Activated T-helper 2 cell treated with anti-CD3 and anti-CD28 coated beads, Interferon-gamma antibody, Interleukin-2, Interleukin-4, amounts not matched to agents 10 μg/mL and 5 μg/mL and 100 μg/mL, durations not matched to agents 14 hours and 24 hours and 36 hours (primary cell): ENCODE measurements at regions of chr14 and their contacts with region 1.

Region 1: DNA sequence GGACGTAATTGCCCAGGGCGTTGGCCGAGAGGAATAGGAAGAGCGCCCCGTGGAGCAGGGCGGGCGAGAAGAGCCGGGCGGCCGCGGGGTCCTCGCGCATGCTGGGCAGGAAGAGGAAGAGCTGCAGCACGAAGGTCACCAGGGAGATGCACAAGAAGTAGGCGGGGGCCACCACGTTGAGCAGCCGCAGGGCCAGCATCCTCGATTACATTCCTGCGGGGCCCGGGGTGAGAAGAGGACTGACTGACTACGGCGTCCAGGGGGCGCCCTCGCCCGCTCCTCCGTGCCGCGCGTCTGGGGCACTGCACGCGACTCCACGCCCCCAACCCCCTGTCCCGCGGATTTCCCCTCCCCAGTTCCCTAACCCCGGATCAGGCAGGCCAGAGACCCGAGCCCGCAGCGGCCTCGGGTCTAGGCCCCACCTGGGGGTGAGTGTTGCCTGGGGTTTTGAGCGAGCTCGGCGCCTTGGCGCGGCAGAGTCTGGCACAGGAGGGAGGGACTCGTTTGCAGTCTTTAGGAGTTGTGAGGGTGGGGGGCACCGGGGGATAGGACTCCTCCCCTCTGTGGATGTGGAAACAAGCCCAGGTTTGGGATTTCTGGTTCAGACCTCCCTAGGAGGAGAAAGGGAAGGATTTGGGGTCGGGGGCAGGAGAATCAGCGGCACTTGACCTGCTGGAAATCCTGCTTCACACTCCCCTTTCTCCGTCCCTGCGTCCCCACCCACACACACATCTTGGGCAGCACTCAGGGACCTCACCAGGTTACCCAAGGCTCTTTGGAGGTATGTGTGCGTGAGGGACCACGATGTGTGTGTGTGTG is 1.8 kb downstream of the ZDHHC22 start:
- DNase-seq: peak; percentile 43
- H3K4me3 Mint-ChIP-seq: no peak overlapping the region
- H3K27ac Mint-ChIP-seq: no peak overlapping the region
- H3K4me1 Mint-ChIP-seq: peaks cover 12% of the 10 kb centered on the region
- H3K27me3 Mint-ChIP-seq: peaks cover 52% of the 10 kb centered on the region

Region 2: GRCh38 chr14:76375947-76376404 is 763.8 kb before region 1 on chr14 and contains the start of gene ESRRB:
- intact Hi-C with region 1: loop called (anchors 10 kb)
- DNase-seq: no peak
- H3K4me3 Mint-ChIP-seq: no peak within 1 kb of the TSS
- H3K27ac Mint-ChIP-seq: no peak within 1 kb of the TSS
- H3K4me1 Mint-ChIP-seq: peaks cover 5% of the 10 kb centered on the region
- H3K27me3 Mint-ChIP-seq: peaks cover 56% of the 10 kb centered on the region
- total RNA-seq, gene ESRRB: 0.23 TPM in 2 replicates

Region 3: GRCh38 chr14:78043349-78043748 is 903.6 kb after region 1 on chr14:
- intact Hi-C with region 1: no loop called
- DNase-seq: no peak
- H3K4me3 Mint-ChIP-seq: no peak overlapping the region
- H3K27ac Mint-ChIP-seq: no peak overlapping the region
- H3K4me1 Mint-ChIP-seq: no peaks in the 10 kb centered on the region
- H3K27me3 Mint-ChIP-seq: peaks cover 3% of the 10 kb centered on the region